ENCODE measurements at regions of chr7 and their contacts with region 1.

Region 1: DNA sequence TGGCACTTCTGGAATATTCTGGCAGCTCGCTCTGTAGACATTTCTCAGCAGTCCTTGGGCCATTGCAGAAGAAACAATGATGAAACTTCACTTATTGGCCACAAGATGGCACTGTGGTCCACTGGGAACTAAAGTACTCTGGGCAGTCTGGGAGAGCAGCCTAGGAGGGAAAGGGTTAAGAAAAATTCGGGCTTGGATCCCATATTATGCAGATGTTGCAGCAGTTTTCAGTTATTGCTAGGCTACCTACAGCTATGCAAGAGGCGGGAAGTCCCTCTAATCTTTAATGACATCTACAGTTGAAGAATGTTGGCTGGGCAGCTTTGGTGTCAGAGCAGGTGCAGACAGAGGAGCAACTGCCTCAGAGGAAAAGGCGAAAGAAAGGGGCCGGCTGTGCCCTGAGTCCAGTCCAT is 201.7 kb upstream of the PRSS58 start:
- DNase-seq: peak; percentile 54
- H3K4me3 ChIP-seq: no peak overlapping the region
- H3K27ac ChIP-seq: no peak overlapping the region
- H3K4me1 ChIP-seq: no peaks in the 10 kb centered on the region
- H3K27me3 ChIP-seq: peaks cover 12 to 13% of the 10 kb centered on the region in 2 experiments
- CTCF ChIP-seq: peak; percentile 64 to 68
- POLR2A ChIP-seq: no peak

Region 2: DNA sequence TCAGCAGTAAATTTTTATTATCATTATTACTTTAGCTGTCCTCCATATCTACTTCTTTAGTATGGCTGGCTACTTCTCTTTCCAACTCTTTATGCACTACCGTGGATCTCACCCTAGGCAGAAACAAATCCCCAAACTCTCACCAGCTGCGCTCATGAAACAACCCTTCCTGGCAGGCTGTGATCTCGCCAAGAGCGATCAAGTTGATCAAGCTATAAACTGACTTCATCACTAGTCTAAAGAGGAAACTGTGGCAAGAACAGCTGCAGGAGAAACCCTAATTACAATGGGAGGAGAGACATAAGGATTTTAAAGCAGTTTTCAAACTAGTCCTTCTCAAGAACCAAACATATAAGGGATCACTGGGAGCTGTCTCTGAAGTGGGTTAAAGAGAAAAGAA is 41.2 kb before region 1 on chr7:
- CTCF ChIA-PET with region 1: interaction called, 10 read pairs
- POLR2A ChIA-PET with region 1: no interaction called
- dilution Hi-C with region 1: no loop called
- intact Hi-C with region 1: no loop called
- DNase-seq: no peak
- H3K4me3 ChIP-seq: no peak overlapping the region
- H3K27ac ChIP-seq: no peak overlapping the region
- H3K4me1 ChIP-seq: no peaks in the 10 kb centered on the region
- H3K27me3 ChIP-seq: peaks cover 0 to 5% of the 10 kb centered on the region in 2 experiments
- CTCF ChIP-seq: no peak
- POLR2A ChIP-seq: no peak

Region 3: DNA sequence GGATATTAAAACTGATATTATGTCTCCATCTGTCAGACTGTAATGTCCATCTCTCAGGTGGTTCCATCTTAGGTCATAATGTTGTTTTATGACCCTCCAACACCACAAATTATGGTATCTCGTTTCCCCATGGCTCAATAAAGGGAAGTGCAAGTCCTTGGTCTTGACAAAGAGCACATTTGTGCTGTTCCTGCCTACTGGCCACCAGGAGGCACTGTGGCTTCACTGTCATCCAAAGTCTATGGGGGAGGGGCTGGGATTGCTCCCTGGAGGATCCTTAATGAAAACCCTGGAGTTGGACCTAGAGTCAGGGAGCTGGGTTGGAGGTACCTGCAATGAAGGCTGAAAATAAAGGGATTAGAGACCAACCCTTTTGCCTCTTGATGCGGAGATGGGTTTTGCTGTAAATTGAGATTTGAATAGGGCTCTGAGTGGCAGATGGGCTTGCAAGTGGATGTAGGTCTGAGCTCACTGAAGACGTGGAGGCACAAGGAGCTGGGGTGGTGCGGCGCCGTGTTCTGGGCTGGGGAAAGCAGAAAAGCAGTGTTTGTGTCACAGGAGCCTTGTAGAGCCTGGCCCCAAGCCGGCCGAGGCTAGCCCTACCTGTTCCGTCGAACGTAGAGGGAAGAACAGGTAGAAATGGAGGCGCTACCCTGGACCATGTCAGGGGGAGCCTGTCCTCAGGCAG is 21.2 kb before region 1 on chr7:
- CTCF ChIA-PET with region 1: interaction called, 18 read pairs
- POLR2A ChIA-PET with region 1: no interaction called
- dilution Hi-C with region 1: no loop called
- intact Hi-C with region 1: loop called (anchors 2 kb)
- DNase-seq: peak; percentile 38
- H3K4me3 ChIP-seq: no peak overlapping the region
- H3K27ac ChIP-seq: no peak overlapping the region
- H3K4me1 ChIP-seq: peaks cover 27% of the 10 kb centered on the region
- H3K27me3 ChIP-seq: no peaks in the 10 kb centered on the region
- CTCF ChIP-seq: peak; percentile 81 to 98
- POLR2A ChIP-seq: no peak

Region 4: DNA sequence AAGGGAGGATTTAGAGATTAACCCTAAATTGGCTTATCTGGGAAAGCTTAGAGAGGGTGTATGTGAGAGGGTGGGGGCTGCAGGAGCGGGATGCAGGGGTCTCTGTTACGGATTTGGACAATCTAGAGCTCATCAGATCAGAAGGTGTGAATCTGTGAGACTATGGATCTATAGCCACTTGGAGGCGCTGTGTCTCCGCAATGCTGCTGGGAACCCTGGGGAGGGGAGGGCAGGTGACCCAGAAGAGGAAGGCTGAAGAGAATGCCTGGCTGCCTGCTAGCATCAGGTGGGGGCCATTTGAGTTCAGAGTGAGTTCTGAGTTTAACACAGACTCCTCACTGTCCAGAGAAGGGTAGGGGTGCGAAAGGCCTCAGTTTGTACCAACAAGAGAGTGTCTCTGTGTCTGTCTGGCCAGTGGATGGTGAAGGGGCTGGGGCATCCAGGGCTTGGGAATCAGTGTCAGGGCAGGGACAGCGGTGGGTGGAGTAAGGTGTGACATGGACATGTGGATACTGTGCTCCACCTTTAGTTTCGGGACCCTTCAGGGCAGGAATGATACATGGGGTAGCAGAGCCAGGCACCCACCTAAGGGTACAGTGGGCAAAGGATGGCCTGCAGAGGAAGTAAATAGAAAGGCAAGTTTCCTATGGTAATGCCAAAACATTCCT is 14.4 kb before region 1 on chr7:
- CTCF ChIA-PET with region 1: interaction called, 18 read pairs
- POLR2A ChIA-PET with region 1: no interaction called
- dilution Hi-C with region 1: no loop called
- intact Hi-C with region 1: no loop called
- DNase-seq: no peak
- H3K4me3 ChIP-seq: no peak overlapping the region
- H3K27ac ChIP-seq: no peak overlapping the region
- H3K4me1 ChIP-seq: peaks cover 31% of the 10 kb centered on the region
- H3K27me3 ChIP-seq: peaks cover 0 to 2% of the 10 kb centered on the region in 2 experiments
- CTCF ChIP-seq: peak; percentile 9
- POLR2A ChIP-seq: no peak

Region 5: GRCh38 chr7:142469696-142470543 is 10.4 kb after region 1 on chr7:
- CTCF ChIA-PET with region 1: interaction called, 19 read pairs
- POLR2A ChIA-PET with region 1: no interaction called
- dilution Hi-C with region 1: no loop called
- intact Hi-C with region 1: loop called (anchors 1 kb)
- DNase-seq: no peak
- H3K4me3 ChIP-seq: no peak overlapping the region
- H3K27ac ChIP-seq: no peak overlapping the region
- H3K4me1 ChIP-seq: no peaks in the 10 kb centered on the region
- H3K27me3 ChIP-seq: no peaks in the 10 kb centered on the region
- CTCF ChIP-seq: no peak
- POLR2A ChIP-seq: no peak

Region 6: DNA sequence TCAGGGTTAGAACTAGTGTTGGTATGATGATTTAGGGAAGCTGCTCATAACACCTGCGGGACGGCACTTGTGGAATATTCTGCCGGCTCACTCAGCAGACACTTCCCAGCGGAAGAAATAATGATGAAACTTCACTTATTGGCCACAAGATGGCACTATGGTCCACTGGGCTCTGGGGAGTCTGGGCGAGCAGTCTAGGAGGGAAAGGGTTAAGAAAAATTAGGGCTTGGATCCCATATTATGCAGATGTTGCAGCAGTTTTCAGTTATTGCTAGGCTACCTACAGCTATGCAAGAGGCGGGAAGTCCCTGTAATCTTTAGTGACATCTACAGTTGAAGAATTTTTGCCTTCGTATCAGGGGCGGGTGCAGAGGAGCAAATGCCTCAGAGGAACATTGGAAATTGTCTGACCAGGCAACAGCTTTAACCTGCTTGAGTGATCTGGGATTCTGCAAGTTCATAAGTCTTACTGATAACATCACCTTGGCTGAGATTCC is 37.0 kb after region 1 on chr7:
- CTCF ChIA-PET with region 1: interaction called, 7 read pairs
- POLR2A ChIA-PET with region 1: no interaction called
- dilution Hi-C with region 1: no loop called
- intact Hi-C with region 1: loop called (anchors 1 kb)
- DNase-seq: peak; percentile 41
- H3K4me3 ChIP-seq: no peak overlapping the region
- H3K27ac ChIP-seq: no peak overlapping the region
- H3K4me1 ChIP-seq: no peaks in the 10 kb centered on the region
- H3K27me3 ChIP-seq: peaks cover 14 to 27% of the 10 kb centered on the region in 2 experiments
- CTCF ChIP-seq: peak; percentile 65 to 71
- POLR2A ChIP-seq: no peak